ENCODE measurements at regions of chrX and their contacts with region 1.

Region 1: DNA sequence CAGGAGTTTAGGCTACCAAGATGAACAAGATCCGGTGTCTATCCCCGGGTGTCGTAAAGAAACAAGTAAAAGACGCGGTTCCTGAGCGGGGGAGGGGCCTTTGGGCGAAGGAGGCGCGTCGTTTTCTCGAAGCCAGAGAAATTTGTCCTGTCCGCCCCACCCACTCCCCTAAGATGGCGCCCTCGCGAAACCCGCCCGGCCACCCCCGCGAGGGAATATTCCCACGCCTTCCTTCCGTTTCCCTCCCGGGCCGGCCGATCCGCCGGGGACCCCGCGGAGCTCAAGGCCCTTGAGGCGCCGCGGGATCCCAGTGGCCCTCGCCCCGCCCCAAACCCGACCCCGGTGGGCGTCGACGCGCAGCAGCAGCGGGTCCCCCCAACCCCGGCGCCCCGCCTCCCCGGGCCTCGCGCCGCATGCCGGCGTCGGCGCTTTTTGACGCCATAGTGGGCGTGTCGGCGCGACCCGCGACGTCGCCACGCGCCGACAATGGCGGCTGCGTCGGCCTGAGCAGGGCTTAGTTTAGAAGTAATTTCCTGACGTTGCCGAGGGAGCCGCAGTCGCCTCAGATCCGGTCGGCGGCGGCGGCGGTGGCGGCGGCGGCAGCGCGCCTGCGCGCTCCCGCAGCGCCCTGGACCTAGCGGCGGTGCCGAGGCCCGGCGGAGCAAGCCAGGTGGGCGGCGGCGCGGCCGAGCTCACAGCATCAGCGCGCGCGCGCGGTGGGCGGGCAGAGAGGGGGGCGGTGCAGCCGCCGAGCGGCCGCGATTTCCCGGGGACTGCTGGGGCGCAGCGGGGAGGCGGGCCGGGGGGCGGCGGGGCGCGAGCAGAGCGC is at the start of gene HTATSF1:
- DNase-seq: peak; percentile 53 to 95 (median 68)

Region 2: GRCh38 chrX:135973548-135974278 is 523.3 kb before region 1 on chrX and contains the start of gene MMGT1:
- intact Hi-C with region 1: loop called (anchors 5 kb)
- DNase-seq: peak; percentile 64 to 97 (median 78)

Region 3: GRCh38 chrX:136259543-136259942 is 237.4 kb before region 1 on chrX:
- intact Hi-C with region 1: no loop called
- DNase-seq: no peak

Region 4: GRCh38 chrX:136376713-136377112 is 120.3 kb before region 1 on chrX:
- intact Hi-C with region 1: no loop called
- DNase-seq: no peak

Measured in posterior cingulate gyrus (tissue), 11 donors.